PC-9 (cell line): ENCODE measurements at regions of chr6 and their contacts with region 1.

Region 1: DNA sequence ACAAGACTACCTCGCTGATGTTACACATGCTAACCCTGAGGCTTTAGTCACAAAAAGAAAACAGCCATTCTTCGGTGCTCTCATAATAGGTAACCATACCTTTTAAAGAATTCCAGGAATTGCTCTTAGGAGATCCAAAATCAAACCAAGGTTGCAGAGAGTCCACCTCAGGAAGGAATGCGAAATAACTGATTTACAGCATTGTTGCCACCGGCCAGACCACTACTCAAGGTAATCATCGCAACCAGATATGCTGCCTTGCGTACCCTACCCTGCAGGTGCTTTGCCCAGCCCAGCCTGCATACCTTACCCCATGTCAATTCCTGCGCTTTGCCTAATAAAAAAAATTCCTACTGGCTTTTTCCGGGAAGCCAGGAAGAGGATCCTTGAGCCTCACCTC is 27.0 kb downstream of the NUP153 start:
- DNase-seq: no peak
- H3K4me3 ChIP-seq: no peak overlapping the region
- H3K27ac ChIP-seq: no peak overlapping the region
- H3K4me1 ChIP-seq: no peaks in the 10 kb centered on the region
- H3K27me3 ChIP-seq: no peaks in the 10 kb centered on the region
- CTCF ChIP-seq: no peak

Region 2: GRCh38 chr6:17768388-17768787 is 88.7 kb after region 1 on chr6:
- CTCF ChIA-PET with region 1: no interaction called
- POLR2A ChIA-PET with region 1: no interaction called
- intact Hi-C with region 1: loop called (anchors 5 kb)
- DNase-seq: no peak
- H3K4me3 ChIP-seq: no peak overlapping the region
- H3K27ac ChIP-seq: no peak overlapping the region
- H3K4me1 ChIP-seq: no peaks in the 10 kb centered on the region
- H3K27me3 ChIP-seq: no peaks in the 10 kb centered on the region
- CTCF ChIP-seq: no peak